Activated CD4-positive, alpha-beta T cell treated with anti-CD3 and anti-CD28 coated beads for 36 hours (primary cell): ENCODE measurements at regions of chr6 and their contacts with region 1.

Region 1: DNA sequence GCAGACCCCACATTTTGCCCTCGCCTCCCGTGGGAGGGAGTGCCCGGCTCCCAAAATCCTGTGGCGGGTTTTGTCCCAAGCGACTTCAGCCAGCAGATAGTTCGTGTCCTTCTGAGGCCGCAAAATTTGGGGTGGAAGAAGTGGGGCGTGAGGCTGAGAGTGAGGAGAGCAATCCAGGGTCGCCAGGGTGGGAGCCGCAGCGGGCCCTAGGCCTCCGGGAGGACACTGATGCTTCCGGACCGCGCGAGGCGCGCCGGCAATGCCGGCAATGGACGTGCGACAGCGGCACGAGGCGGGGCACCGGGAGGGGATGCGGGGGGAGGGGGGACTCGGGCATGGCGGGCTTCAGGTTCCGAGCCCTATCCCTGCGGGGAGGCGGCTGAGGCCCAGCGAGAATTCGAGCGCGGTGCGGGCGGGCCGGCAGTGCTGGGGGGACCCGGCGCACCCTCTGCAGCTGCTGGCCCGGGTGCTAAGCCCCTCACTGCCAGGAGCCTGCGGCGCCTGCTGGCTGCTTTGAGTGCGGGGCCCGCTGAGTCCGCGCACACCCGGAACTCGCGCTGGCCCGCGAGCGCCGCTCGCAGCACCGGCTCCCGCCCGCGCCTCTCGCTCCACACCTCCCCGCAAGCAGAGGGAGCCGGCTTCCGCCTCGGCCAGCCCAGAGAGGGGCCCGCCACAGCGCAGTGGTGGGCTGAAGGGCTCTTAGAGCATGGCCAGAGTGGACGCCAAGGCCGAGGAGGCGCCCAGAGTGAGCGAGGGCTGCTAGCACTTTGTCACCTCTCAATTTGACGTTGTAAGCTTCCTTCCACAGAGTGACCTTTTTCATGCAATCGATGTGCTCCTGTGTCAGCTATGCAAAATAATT is 143.8 kb downstream of the LPA start:
- DNase-seq: peak; percentile 83
- ATAC-seq: peak; percentile 76
- H3K4me3 Mint-ChIP-seq: peak overlapping the region; percentile 79
- H3K27ac Mint-ChIP-seq: peak overlapping the region; percentile 80
- H3K4me1 Mint-ChIP-seq: peaks cover 25% of the 10 kb centered on the region
- H3K27me3 Mint-ChIP-seq: peaks cover 5% of the 10 kb centered on the region

Region 2: DNA sequence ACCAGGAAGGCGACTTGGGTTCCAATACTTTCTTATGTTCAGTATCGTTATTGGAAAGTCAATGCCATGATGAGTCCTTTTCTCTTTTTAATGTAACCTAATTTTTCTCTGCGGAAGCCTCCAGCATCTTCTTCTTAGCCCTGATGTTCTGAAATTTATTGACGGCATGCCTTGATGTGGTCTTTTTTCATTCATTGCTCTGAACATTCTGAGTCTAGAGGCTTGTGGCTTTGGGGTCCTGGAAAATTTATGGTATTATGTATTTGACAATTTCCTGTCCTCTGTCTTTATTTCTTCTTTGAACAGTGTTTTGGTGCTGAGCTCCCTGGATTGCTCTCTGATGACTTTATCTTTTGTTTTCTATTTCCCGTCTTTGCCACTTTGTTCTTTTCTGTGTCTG is 658.2 kb before region 1 on chr6:
- CTCF ChIA-PET with region 1: interaction called, 3 read pairs
- POLR2A ChIA-PET with region 1: no interaction called
- intact Hi-C with region 1: loop called in 1 of 2 experiments (anchors 5 kb)
- DNase-seq: no peak
- ATAC-seq: peak; percentile 19
- H3K4me3 Mint-ChIP-seq: no peak overlapping the region
- H3K27ac Mint-ChIP-seq: peak overlapping the region; percentile 0
- H3K4me1 Mint-ChIP-seq: peaks cover 15% of the 10 kb centered on the region
- H3K27me3 Mint-ChIP-seq: peaks cover 2% of the 10 kb centered on the region

Region 3: DNA sequence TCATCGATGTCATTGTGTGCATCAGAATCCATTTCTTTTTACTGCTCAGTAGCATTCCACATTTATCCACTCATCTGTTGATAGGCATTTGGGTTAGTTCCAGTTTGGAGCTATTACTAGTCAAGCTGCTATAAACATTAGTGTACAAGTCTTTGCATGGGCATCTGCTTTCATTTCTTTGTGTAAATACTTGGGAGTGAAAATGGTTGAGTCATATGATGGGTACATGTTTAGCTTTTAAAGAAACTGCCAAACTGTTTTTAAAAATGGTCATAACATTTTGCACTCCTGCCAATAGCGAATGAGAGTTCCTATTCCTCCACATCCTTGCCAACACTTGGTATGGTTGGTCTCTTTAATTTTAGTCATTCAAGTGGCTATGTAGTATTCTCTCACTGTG is 240.4 kb before region 1 on chr6:
- CTCF ChIA-PET with region 1: no interaction called
- POLR2A ChIA-PET with region 1: no interaction called
- intact Hi-C with region 1: no loop called
- DNase-seq: no peak
- ATAC-seq: no peak
- H3K4me3 Mint-ChIP-seq: no peak overlapping the region
- H3K27ac Mint-ChIP-seq: no peak overlapping the region
- H3K4me1 Mint-ChIP-seq: no peaks in the 10 kb centered on the region
- H3K27me3 Mint-ChIP-seq: peaks cover 14% of the 10 kb centered on the region

Region 4: GRCh38 chr6:160379464-160379863 is 140.8 kb before region 1 on chr6:
- CTCF ChIA-PET with region 1: no interaction called
- POLR2A ChIA-PET with region 1: no interaction called
- intact Hi-C with region 1: no loop called
- DNase-seq: no peak
- ATAC-seq: no peak
- H3K4me3 Mint-ChIP-seq: no peak overlapping the region
- H3K27ac Mint-ChIP-seq: no peak overlapping the region
- H3K4me1 Mint-ChIP-seq: no peaks in the 10 kb centered on the region
- H3K27me3 Mint-ChIP-seq: peaks cover 5% of the 10 kb centered on the region

Region 5: GRCh38 chr6:160462551-160463109 is 57.6 kb before region 1 on chr6:
- CTCF ChIA-PET with region 1: interaction called, 7 read pairs
- POLR2A ChIA-PET with region 1: no interaction called
- intact Hi-C with region 1: loop called (anchors 1 to 2 kb)
- DNase-seq: peak; percentile 63
- ATAC-seq: peak; percentile 80
- H3K4me3 Mint-ChIP-seq: peak overlapping the region; percentile 17
- H3K27ac Mint-ChIP-seq: peak overlapping the region; percentile 65
- H3K4me1 Mint-ChIP-seq: peaks cover 60% of the 10 kb centered on the region
- H3K27me3 Mint-ChIP-seq: peaks cover 34% of the 10 kb centered on the region

Region 6: DNA sequence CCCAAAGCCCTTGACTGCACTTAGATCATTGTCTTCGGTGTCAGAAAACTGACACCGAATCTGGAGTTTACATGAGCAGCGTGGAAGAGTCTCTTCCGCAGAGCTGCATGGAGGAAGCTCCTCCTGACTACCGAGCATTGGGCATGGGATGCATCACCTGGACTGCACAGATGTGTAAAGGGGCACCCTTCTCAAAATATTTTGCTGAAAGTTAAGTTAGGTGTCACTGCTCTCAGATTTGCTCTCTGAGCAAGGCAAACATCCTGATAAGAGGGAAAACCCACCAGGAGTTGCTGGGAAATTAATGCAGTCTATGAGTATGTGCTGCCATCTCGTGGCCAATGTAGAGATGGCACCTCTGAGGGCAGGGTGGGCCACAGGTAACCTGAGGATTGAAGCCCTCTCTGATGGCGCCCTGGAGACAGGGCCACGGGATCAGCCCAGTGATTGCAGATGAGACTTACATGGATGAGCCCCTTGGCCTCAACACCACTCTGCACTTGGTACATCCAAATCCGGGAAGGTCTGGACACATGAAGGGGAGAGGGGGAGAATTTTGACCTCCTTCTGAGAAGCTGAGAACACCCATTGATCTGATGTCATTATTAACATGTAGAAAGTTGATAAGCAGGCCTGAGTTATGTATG is 13.9 kb after region 1 on chr6:
- CTCF ChIA-PET with region 1: interaction called, 88 read pairs
- POLR2A ChIA-PET with region 1: interaction called, 3 read pairs
- intact Hi-C with region 1: loop called (anchors 1 kb)
- DNase-seq: peak; percentile 71
- ATAC-seq: peak; percentile 76
- H3K4me3 Mint-ChIP-seq: no peak overlapping the region
- H3K27ac Mint-ChIP-seq: no peak overlapping the region
- H3K4me1 Mint-ChIP-seq: no peaks in the 10 kb centered on the region
- H3K27me3 Mint-ChIP-seq: peaks cover 2% of the 10 kb centered on the region

Region 7: DNA sequence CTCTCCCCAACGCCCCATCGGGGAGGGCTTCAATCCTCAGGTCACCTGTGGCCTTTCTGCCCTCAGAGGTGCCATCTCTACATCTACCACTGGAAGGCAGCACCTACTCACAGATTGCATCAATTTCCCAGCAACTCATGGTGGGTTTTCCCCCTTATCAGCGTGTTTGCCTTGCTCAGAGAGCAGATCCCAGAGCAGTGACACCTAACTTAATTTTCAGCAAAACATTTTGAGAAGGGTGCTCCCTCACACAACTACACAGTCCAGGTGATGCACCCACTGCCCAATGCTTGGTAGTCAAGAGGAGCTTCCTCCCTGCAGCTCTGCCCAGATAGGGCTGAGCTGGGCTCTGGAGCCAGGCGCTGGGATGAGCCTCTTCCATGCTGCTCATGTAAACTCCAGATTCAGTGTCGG is 230.0 kb after region 1 on chr6:
- CTCF ChIA-PET with region 1: no interaction called
- POLR2A ChIA-PET with region 1: no interaction called
- intact Hi-C with region 1: no loop called
- DNase-seq: peak; percentile 48
- ATAC-seq: peak; percentile 51
- H3K4me3 Mint-ChIP-seq: no peak overlapping the region
- H3K27ac Mint-ChIP-seq: no peak overlapping the region
- H3K4me1 Mint-ChIP-seq: no peaks in the 10 kb centered on the region
- H3K27me3 Mint-ChIP-seq: peaks cover 15% of the 10 kb centered on the region

Region 8: GRCh38 chr6:160766989-160767660 is 246.9 kb after region 1 on chr6:
- CTCF ChIA-PET with region 1: no interaction called
- POLR2A ChIA-PET with region 1: no interaction called
- intact Hi-C with region 1: loop called in 1 of 2 experiments (anchors 1 kb)
- DNase-seq: peak; percentile 75
- ATAC-seq: peak; percentile 86
- H3K4me3 Mint-ChIP-seq: peak overlapping the region; percentile 60
- H3K27ac Mint-ChIP-seq: no peak overlapping the region
- H3K4me1 Mint-ChIP-seq: peaks cover 7% of the 10 kb centered on the region
- H3K27me3 Mint-ChIP-seq: peaks cover 33% of the 10 kb centered on the region

Region 9: GRCh38 chr6:160883999-160884398 is 363.7 kb after region 1 on chr6:
- CTCF ChIA-PET with region 1: no interaction called
- POLR2A ChIA-PET with region 1: no interaction called
- intact Hi-C with region 1: no loop called
- DNase-seq: no peak
- ATAC-seq: no peak
- H3K4me3 Mint-ChIP-seq: no peak overlapping the region
- H3K27ac Mint-ChIP-seq: no peak overlapping the region
- H3K4me1 Mint-ChIP-seq: no peaks in the 10 kb centered on the region
- H3K27me3 Mint-ChIP-seq: peaks cover 2% of the 10 kb centered on the region